ENCODE measurements at regions of chr5 and their contacts with region 1.

Region 1: DNA sequence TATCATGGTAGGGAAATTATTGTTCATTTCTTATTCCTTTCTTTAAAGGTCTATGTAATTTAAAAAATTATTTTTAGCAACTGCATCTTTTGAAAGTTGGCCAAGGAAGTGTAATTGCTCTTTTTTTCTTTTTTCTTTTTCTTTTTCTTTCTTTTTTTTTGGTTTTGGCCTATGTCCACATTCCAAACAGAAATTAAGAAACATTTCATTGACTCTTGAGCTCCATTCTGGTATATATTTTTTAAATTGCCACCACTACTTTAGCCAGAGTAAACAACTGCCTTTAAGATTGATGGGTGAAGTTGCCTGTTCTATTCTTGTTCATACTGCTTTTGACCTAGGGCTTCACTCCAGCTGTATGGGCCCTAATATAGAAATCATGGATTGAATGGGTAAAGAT is 75.8 kb upstream of the TMEM171 start:
- DNase-seq: no peak
- H3K4me3 ChIP-seq: no peak overlapping the region
- H3K27ac ChIP-seq: no peak overlapping the region
- H3K4me1 ChIP-seq: no peaks in the 10 kb centered on the region
- H3K27me3 ChIP-seq: no peaks in the 10 kb centered on the region
- CTCF ChIP-seq: no peak
- POLR2A ChIP-seq: no peak

Region 2: DNA sequence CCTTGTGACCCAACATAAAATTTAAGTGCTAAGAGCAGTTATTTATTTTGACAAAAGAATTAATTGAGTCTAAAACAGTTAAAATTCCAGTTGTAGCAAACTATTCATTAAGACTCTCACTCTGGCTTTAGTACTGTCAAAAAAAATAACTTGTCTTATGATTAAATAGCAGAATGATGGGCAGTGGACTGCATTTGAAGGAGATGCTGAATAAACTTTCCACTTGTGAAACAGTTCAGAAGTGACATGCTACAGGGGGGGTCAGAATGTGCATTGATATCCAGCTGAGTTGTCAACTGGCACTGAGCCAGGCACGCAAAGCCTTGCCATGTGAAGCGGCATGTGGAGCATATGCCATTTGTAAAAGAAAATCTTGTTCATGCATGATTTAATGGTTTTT is 12.7 kb before region 1 on chr5:
- intact Hi-C with region 1: loop called (anchors 2 kb)
- DNase-seq: no peak
- H3K4me3 ChIP-seq: no peak overlapping the region
- H3K27ac ChIP-seq: no peak overlapping the region
- H3K4me1 ChIP-seq: peaks cover 21% of the 10 kb centered on the region
- H3K27me3 ChIP-seq: no peaks in the 10 kb centered on the region
- CTCF ChIP-seq: no peak
- POLR2A ChIP-seq: no peak

Region 3: DNA sequence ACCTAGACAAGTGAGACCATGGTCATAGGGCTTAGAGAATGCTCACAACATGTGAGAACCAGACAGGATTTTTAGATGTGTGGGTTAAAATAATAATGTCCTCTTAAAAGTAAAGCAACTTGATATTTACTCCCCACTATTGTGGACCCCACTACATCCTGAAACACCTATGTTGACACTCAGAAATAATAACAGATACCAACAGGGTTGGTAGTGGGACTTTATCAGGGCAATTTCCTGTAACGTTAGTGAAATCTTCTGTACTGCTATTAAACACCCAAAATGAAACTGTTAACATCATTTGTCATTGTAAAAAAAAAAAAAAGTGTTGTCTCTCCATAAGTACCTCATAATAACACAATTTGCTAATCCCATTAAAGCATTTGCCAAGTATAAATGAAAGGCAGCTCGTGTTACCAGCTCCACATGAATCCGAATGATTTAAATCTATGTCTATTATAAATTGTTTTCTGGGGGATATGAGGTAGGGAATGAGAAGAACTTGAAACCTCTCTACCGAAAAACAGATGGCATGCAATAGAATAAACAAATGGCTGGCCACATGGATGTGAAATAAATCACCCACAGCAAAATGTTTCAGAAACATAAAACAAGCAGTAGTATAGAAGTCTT is 867.3 kb after region 1 on chr5:
- intact Hi-C with region 1: no loop called
- DNase-seq: no peak
- H3K4me3 ChIP-seq: no peak overlapping the region
- H3K27ac ChIP-seq: no peak overlapping the region
- H3K4me1 ChIP-seq: peaks cover 7% of the 10 kb centered on the region
- H3K27me3 ChIP-seq: no peaks in the 10 kb centered on the region
- CTCF ChIP-seq: no peak
- POLR2A ChIP-seq: no peak

Measured in vagina (tissue), 2 donors.